ENCODE measurements at regions of chr17 and their contacts with region 1.

Region 1: DNA sequence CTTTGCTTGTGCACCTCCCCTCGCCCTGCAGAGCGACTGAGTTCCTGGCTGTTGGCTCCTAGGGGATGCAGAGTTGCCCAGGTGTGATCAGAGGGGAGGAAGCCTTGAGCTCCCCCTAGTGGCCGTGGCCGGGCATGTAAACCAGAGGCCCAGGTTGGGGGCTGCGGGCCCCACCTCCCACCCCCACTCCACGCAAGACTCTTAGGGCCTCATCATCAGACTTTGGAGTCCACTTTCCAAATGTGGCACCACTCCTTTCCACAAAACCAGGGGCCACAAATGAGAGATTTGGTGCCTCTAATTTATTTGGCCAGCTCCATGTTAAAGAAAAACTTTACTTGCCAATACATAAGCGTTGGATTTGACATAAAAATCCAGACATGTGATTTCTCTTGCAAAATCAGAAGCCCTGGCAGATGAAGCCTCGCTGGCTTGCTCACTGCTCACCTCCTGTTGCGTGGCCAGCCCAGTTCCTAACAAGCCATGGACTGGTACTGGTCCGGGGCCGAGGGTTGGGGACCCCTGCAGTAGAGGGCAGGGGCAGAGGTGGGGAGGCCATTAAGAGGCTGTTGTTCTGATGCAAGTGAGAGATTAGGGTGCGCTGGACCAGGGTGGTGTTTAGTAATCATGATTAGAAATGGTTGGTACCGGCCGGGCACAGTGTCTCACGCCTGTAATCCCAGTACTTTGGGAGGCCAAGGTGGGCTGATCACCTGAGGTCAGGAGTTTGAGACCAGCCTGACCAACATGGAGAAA is 28.7 kb upstream of the GAS7 start:
- DNase-seq: peak; percentile 32 to 75 (median 50)
- ATAC-seq: peak in 3 of 4 donors; percentile 75 to 88 (median 81)
- H3K4me3 ChIP-seq: no peak overlapping the region
- H3K27ac ChIP-seq: no peak overlapping the region
- H3K4me1 ChIP-seq: no peaks in the 10 kb centered on the region
- H3K27me3 ChIP-seq: no peaks in the 10 kb centered on the region
- CTCF ChIP-seq: peak; percentile 61 to 89 (median 73)
- POLR2A ChIP-seq: no peak

Region 2: GRCh38 chr17:9959377-9959981 is 267.6 kb before region 1 on chr17:
- intact Hi-C with region 1: loop called in 3 of 10 experiments (anchors 2 kb)
- DNase-seq: peak in 1 of 5 donors; percentile 28
- ATAC-seq: peak in 1 of 4 donors; percentile 13
- H3K4me3 ChIP-seq: peak overlapping the region in 1 of 12 donors; percentile 21
- H3K27ac ChIP-seq: no peak overlapping the region
- H3K4me1 ChIP-seq: peaks cover 0 to 10% (median 7%) of the 10 kb centered on the region in 12 donors
- H3K27me3 ChIP-seq: peaks cover 0 to 6% (median 0%) of the 10 kb centered on the region in 9 donors
- CTCF ChIP-seq: peak in 9 of 12 donors; percentile 11 to 50 (median 35)
- POLR2A ChIP-seq: no peak

Region 3: DNA sequence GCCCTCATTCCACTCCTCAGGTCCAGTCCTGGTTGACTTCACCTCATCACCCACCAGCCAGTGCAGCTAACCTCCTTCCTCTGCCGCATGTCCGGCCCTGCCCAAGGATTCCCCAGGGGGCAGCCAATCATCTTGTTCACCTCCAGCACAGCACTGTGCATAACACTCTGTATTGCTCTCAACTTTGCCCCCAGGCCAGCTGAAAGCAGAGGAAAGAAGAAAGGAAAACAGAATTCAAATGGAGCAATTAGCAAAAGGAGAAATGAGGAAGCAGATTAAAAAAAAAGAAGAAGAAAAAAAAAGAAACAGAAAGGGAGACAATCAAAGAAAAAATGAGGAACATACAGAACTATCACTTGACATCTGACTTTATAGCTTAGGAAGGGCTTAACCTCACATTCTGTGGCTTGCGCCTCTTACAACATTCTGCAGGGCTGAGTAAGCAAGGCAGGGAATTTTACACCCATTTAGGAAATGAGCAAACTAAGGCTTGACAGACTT is 54.8 kb before region 1 on chr17:
- intact Hi-C with region 1: no loop called
- DNase-seq: no peak
- ATAC-seq: peak in 3 of 4 donors; percentile 35 to 53 (median 38)
- H3K4me3 ChIP-seq: peak overlapping the region in 1 of 12 donors; percentile 22
- H3K27ac ChIP-seq: peak overlapping the region in 2 of 12 donors; percentile 46 to 88
- H3K4me1 ChIP-seq: peaks cover 0 to 61% (median 14%) of the 10 kb centered on the region in 12 donors
- H3K27me3 ChIP-seq: peaks cover 0 to 5% (median 0%) of the 10 kb centered on the region in 9 donors
- CTCF ChIP-seq: no peak
- POLR2A ChIP-seq: no peak

Region 4: GRCh38 chr17:10271106-10271562 is 44.0 kb after region 1 on chr17:
- intact Hi-C with region 1: no loop called
- DNase-seq: no peak
- ATAC-seq: peak in 3 of 4 donors; percentile 26 to 75 (median 73)
- H3K4me3 ChIP-seq: no peak overlapping the region
- H3K27ac ChIP-seq: peak overlapping the region in 5 of 12 donors; percentile 14 to 56 (median 24)
- H3K4me1 ChIP-seq: peaks cover 0 to 8% (median 0%) of the 10 kb centered on the region in 12 donors
- H3K27me3 ChIP-seq: peaks cover 0 to 7% (median 0%) of the 10 kb centered on the region in 9 donors
- CTCF ChIP-seq: no peak
- POLR2A ChIP-seq: no peak